GM12878 (cell line): ENCODE measurements at regions of chr19 and their contacts with region 1.

Region 1: GRCh38 chr19:7705387-7706187 is 3.7 kb upstream of the FCER2 start:
- DNase-seq: peak; percentile 91
- ATAC-seq: peak; percentile 66
- H3K4me3 ChIP-seq: peak overlapping the region; percentile 53; the same call in 1 of the 2 replicates
- H3K27ac ChIP-seq: peak overlapping the region; percentile 99
- H3K4me1 ChIP-seq: peaks cover 83% of the 10 kb centered on the region
- H3K27me3 ChIP-seq: no peaks in the 10 kb centered on the region
- CTCF ChIP-seq: no peak
- EP300 ChIP-seq: peak; percentile 88 to 92
- POLR2A ChIP-seq: peak; percentile 63; the same call in 1 of the 2 replicates
- RAD21 ChIP-seq: peak; percentile 52

Region 2: GRCh38 chr19:7191946-7192691 is 513.5 kb before region 1 on chr19:
- CTCF ChIA-PET with region 1: no interaction called
- POLR2A ChIA-PET with region 1: no interaction called
- RAD21 ChIA-PET with region 1: no interaction called
- SMC1A ChIA-PET with region 1: no interaction called
- in situ Hi-C with region 1: loop called (anchors 10 kb)
- intact Hi-C with region 1: no loop called
- DNase-seq: no peak
- ATAC-seq: peak; percentile 83
- H3K4me3 ChIP-seq: 0 out of 2 replicates have a peak overlapping the region, but pooled peaks have one; percentile 37
- H3K27ac ChIP-seq: peak overlapping the region; percentile 74
- H3K4me1 ChIP-seq: peaks cover 39% of the 10 kb centered on the region
- H3K27me3 ChIP-seq: no peaks in the 10 kb centered on the region
- CTCF ChIP-seq: no peak
- EP300 ChIP-seq: peak; percentile 70 to 71; a peak in 3 of 4 replicates
- POLR2A ChIP-seq: peak; percentile 45; the same call in 1 of the 2 replicates
- RAD21 ChIP-seq: no peak

Region 3: GRCh38 chr19:7327802-7328201 is 377.8 kb before region 1 on chr19:
- CTCF ChIA-PET with region 1: no interaction called
- POLR2A ChIA-PET with region 1: no interaction called
- RAD21 ChIA-PET with region 1: no interaction called
- SMC1A ChIA-PET with region 1: no interaction called
- in situ Hi-C with region 1: no loop called
- intact Hi-C with region 1: no loop called
- DNase-seq: no peak
- ATAC-seq: no peak
- H3K4me3 ChIP-seq: no peak overlapping the region
- H3K27ac ChIP-seq: no peak overlapping the region
- H3K4me1 ChIP-seq: no peaks in the 10 kb centered on the region
- H3K27me3 ChIP-seq: no peaks in the 10 kb centered on the region
- CTCF ChIP-seq: no peak
- EP300 ChIP-seq: no peak
- POLR2A ChIP-seq: no peak
- RAD21 ChIP-seq: no peak

Region 4: GRCh38 chr19:7743425-7743841 is 37.8 kb after region 1 on chr19:
- CTCF ChIA-PET with region 1: no interaction called
- POLR2A ChIA-PET with region 1: interaction called, 5 read pairs
- RAD21 ChIA-PET with region 1: interaction called, 11 read pairs
- SMC1A ChIA-PET with region 1: interaction called, 6 read pairs
- in situ Hi-C with region 1: no loop called
- intact Hi-C with region 1: loop called (anchors 2 kb)
- DNase-seq: peak; percentile 53
- ATAC-seq: peak; percentile 97
- H3K4me3 ChIP-seq: no peak overlapping the region
- H3K27ac ChIP-seq: no peak overlapping the region
- H3K4me1 ChIP-seq: peaks cover 30% of the 10 kb centered on the region
- H3K27me3 ChIP-seq: no peaks in the 10 kb centered on the region
- CTCF ChIP-seq: no peak
- EP300 ChIP-seq: peak; percentile 86 to 88; a peak in 3 of 4 replicates
- POLR2A ChIP-seq: no peak
- RAD21 ChIP-seq: no peak

Region 5: GRCh38 chr19:7808133-7808532 is 102.5 kb after region 1 on chr19:
- CTCF ChIA-PET with region 1: no interaction called
- POLR2A ChIA-PET with region 1: interaction called, 4 read pairs
- RAD21 ChIA-PET with region 1: no interaction called
- SMC1A ChIA-PET with region 1: no interaction called
- in situ Hi-C with region 1: no loop called
- intact Hi-C with region 1: loop called (anchors 5 kb)
- DNase-seq: no peak
- ATAC-seq: no peak
- H3K4me3 ChIP-seq: no peak overlapping the region; the same call in 1 of the 2 replicates
- H3K27ac ChIP-seq: peak overlapping the region; percentile 32; the same call in 1 of the 2 replicates
- H3K4me1 ChIP-seq: peaks cover 15% of the 10 kb centered on the region
- H3K27me3 ChIP-seq: no peaks in the 10 kb centered on the region
- CTCF ChIP-seq: no peak
- EP300 ChIP-seq: no peak
- POLR2A ChIP-seq: no peak
- RAD21 ChIP-seq: no peak